ENCODE measurements at regions of chr21 and their contacts with region 1.

Region 1: GRCh38 chr21:34974162-34974981 is 74.7 kb downstream of the RUNX1 start:
- DNase-seq: peak; percentile 65
- CTCF ChIP-seq: no peak

Region 2: DNA sequence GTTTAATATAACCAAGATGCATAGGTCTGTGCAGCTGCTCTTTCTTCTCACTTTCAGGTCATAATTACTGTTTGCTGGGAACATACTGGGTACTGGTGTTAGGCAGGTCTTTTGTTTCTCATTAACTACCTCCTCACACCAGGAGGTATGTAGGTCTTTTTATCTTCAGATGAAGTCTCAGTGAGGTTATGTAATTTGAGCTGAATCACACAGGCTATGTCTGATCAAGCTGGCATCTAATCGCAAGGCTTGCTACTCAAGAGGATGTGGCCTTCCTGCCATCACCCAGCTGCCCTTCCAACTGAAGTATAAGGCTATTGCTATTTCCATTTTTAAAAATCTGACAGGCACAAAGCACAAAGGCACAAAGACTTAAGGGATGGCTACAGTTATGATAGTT is 21.7 kb before region 1 on chr21:
- CTCF ChIA-PET with region 1: interaction called, 15 read pairs
- POLR2A ChIA-PET with region 1: no interaction called
- DNase-seq: no peak
- CTCF ChIP-seq: no peak

Region 3: GRCh38 chr21:34986561-34987500 is 12.5 kb after region 1 on chr21:
- CTCF ChIA-PET with region 1: interaction called, 40 read pairs
- POLR2A ChIA-PET with region 1: interaction called, 3 read pairs
- DNase-seq: peak; percentile 59
- CTCF ChIP-seq: no peak